ENCODE measurements at regions of chr15 and their contacts with region 1.

Region 1: DNA sequence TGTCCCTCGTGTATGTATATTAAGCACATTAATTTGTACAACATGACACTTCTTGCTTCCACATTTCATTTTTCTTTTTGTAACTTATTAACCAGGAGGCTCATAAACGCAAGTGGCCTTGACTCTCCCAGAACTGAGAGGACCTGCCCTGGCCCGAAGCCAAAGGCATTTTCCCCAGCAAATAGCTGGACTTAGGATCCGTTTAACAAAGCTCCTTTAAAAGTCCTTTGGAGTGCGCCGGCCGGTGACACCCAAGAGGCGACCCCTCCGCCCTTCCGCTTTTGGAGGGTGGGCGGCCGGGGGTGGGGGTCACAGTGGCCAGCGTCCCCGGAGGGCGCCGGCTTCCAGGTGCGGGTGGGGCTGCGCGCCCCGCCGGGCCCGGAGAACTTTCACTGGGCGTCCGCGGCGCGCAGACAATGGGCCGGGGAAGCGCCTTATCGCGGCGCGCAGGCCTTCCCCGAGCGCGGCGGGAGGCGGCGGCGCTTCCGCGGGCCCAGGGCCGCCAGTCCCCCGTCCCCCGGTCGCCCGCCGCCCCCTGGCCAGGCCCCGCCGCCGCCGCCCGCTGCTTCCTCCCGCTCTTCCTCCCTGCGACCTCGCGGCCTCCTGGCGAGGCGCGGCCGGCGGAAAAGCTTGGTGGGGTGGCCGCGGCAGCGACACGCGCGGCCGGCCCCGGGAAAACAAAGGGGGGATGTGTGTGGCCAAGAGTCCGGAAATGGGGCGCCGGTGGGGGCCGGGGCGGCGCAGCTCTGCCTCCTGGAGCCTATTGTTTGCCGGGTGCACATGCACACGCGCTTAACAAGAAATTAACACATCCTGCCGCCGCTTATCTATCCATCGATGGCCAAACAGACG is 613.4 kb downstream of the MCTP2 start:
- DNase-seq: peak; percentile 76 to 81
- ATAC-seq: peak; percentile 92 to 95 (median 94)
- H3K4me3 ChIP-seq: peak overlapping the region in 9 of 10 donors; percentile 14 to 53 (median 45)
- H3K27ac ChIP-seq: peak overlapping the region in 9 of 10 donors; percentile 36 to 77 (median 67)
- H3K4me1 ChIP-seq: peaks cover 0 to 28% (median 8%) of the 10 kb centered on the region in 9 donors
- H3K27me3 ChIP-seq: peaks cover 0 to 28% (median 9%) of the 10 kb centered on the region in 7 donors
- CTCF ChIP-seq: peak in 2 of 9 donors; percentile 18 to 27

Region 2: DNA sequence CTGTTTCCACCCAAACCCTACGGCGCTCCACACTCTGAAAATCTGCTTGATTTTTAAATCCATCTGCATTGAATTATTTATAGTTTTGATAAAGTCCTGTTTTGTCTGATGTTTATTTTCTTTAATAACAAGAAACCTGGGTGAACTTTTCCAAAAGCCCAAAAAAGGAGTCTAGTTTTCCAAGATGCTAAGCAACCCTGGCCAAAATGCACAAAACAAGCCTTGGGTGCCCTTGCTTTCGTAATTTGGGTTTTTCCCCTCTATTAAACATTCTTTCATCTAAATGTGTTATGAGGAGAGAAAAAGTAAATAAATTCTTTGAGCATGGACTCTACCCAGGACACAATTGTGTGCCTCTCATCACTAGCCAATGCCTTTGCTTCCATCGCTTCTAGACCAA is 144.6 kb before region 1 on chr15:
- intact Hi-C with region 1: loop called in 1 of 10 experiments (anchors 5 kb)
- DNase-seq: no peak
- ATAC-seq: no peak
- H3K4me3 ChIP-seq: no peak overlapping the region
- H3K27ac ChIP-seq: no peak overlapping the region
- H3K4me1 ChIP-seq: no peaks in the 10 kb centered on the region
- H3K27me3 ChIP-seq: no peaks in the 10 kb centered on the region
- CTCF ChIP-seq: no peak

Region 3: DNA sequence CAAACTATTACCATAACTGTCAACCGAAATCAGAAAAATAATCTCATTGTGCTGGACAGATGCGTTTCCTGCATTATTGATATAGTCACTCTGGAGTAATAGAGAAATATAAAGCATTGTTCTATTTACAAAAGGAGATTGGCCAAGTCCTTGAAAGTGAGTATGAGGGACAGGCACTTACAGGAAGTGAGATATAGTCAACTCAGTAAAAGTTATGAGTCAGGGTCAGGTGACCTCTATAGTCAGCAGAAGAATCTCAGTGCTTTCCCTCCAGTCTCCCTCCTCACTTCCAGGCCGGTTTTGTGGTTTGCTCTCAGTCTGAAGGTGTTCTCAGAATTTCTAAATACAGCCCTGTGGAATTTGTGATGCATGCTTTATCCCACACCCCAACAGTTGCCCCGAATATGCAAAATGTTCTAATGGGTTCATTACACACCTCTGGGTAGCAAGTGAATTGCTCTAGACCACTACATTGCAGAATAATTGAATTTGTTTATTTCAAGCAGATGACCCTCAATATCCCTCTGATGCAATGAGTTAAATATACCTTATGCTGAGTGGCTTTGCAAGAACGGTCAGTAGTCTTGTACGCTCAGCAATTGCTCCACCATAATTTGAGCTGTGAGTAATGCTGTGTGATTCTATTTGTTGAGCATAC is 174.3 kb after region 1 on chr15:
- intact Hi-C with region 1: loop called in 3 of 10 experiments (anchors 5 to 10 kb)
- DNase-seq: no peak
- ATAC-seq: peak in 6 of 8 donors; percentile 14 to 85 (median 77)
- H3K4me3 ChIP-seq: no peak overlapping the region
- H3K27ac ChIP-seq: peak overlapping the region in 3 of 10 donors; percentile 28 to 45 (median 42)
- H3K4me1 ChIP-seq: peaks cover 0 to 35% (median 23%) of the 10 kb centered on the region in 9 donors
- H3K27me3 ChIP-seq: no peaks in the 10 kb centered on the region
- CTCF ChIP-seq: no peak

Region 4: GRCh38 chr15:95132774-95133173 is 288.0 kb after region 1 on chr15:
- intact Hi-C with region 1: loop called in 1 of 10 experiments (anchors 10 kb)
- DNase-seq: no peak
- ATAC-seq: no peak
- H3K4me3 ChIP-seq: no peak overlapping the region
- H3K27ac ChIP-seq: no peak overlapping the region
- H3K4me1 ChIP-seq: peaks cover 0 to 26% (median 12%) of the 10 kb centered on the region in 9 donors
- H3K27me3 ChIP-seq: no peaks in the 10 kb centered on the region
- CTCF ChIP-seq: no peak

Measured in heart right ventricle (tissue), 16 donors.